Esophagus squamous epithelium (tissue), 5 donors: ENCODE measurements at regions of chr16 and their contacts with region 1.

Region 1: GRCh38 chr16:24810951-24811843 is 34.6 kb upstream of the SLC5A11 start:
- DNase-seq: no peak
- H3K4me3 ChIP-seq: no peak overlapping the region
- H3K27ac ChIP-seq: no peak overlapping the region
- H3K4me1 ChIP-seq: no peaks in the 10 kb centered on the region
- H3K27me3 ChIP-seq: no peaks in the 10 kb centered on the region
- CTCF ChIP-seq: no peak
- POLR2A ChIP-seq: no peak

Region 2: GRCh38 chr16:24568392-24568791 is 242.8 kb before region 1 on chr16:
- intact Hi-C with region 1: loop called (anchors 10 kb)
- DNase-seq: no peak
- H3K4me3 ChIP-seq: no peak overlapping the region
- H3K27ac ChIP-seq: no peak overlapping the region
- H3K4me1 ChIP-seq: no peaks in the 10 kb centered on the region
- H3K27me3 ChIP-seq: no peaks in the 10 kb centered on the region
- CTCF ChIP-seq: peak in 2 of 6 experiments; percentile 10 to 40
- POLR2A ChIP-seq: no peak